ENCODE measurements at regions of chr4 and their contacts with region 1.

Region 1: DNA sequence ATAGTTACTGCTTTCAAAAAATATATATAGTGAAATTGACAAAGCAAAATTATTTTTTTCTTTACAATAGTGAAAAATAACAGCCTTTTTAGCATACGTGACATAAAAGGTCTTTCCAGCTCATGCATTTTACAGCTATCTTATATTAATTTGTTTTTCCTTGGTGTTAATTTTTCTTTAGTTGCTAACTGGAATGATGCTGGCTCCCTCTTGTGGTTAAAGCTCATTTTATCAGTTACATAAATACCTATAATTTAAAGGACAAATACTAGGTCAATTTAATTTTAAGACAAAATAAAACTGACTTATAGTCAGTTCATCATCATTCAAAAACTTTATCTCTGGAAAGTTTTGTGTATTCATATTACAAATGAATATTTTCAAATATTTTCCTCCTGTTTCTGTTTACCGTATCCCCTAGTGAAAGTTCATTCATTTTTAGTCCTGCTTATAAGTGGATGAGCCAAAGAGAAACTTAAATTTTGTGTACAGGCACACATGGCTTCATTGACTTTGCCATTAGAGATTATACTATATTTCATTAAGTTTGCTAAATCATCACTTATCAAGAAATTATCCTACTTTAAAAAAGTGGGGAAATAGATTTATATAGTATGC is 9.9 kb upstream of the ANAPC4 start:
- DNase-seq: no peak
- H3K4me3 ChIP-seq: no peak overlapping the region
- H3K27ac ChIP-seq: no peak overlapping the region
- H3K4me1 ChIP-seq: peaks cover 0 to 4% (median 1%) of the 10 kb centered on the region in 4 experiments; a peak in 2 of 7 replicates
- H3K27me3 ChIP-seq: no peaks in the 10 kb centered on the region
- CTCF ChIP-seq: peak in 2 of 3 experiments; percentile 36 to 37; a peak in 2 of 4 replicates
- EP300 ChIP-seq: no peak
- POLR2A ChIP-seq: no peak
- RAD21 ChIP-seq: peak; percentile 55 to 72

Region 2: GRCh38 chr4:25180524-25181131 is 186.5 kb before region 1 on chr4:
- CTCF ChIA-PET with region 1: interaction called, 21 read pairs
- POLR2A ChIA-PET with region 1: no interaction called
- DNase-seq: no peak
- H3K4me3 ChIP-seq: no peak overlapping the region
- H3K27ac ChIP-seq: no peak overlapping the region
- H3K4me1 ChIP-seq: no peaks in the 10 kb centered on the region
- H3K27me3 ChIP-seq: no peaks in the 10 kb centered on the region
- CTCF ChIP-seq: peak in 2 of 3 experiments; percentile 65 to 75; a peak in 3 of 4 replicates
- EP300 ChIP-seq: no peak
- POLR2A ChIP-seq: no peak
- RAD21 ChIP-seq: peak; percentile 80 to 84

Region 3: DNA sequence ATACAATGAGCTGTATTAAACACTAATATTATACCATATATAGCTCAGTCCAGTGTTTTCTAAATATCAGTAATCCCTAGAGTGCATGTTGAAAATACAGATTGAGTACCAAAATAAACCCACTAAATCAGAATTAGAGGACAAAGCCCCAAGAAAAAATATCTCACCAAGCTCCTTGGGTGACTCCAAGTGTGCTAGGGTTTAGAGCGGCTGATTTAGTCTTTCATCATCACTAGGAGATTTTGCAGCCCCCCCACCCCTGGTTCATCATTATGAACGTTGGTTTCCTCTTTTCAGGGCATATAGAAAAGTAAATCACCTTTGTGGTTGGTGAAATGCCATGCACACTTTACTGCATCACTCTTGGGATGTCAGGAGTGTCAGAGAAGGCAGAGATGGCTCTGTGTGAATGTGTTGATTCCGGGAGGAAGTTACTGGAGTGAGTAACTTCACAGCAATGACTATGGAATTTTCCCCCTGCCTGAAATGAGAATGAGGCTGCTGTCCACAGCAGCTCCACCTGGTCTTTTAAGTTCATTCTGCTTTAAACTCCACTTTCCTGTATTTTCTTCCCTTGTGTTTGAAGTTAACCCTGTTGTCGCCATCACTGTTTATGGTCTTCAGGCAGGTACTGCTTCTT is 15.2 kb before region 1 on chr4:
- CTCF ChIA-PET with region 1: interaction called, 31 read pairs
- POLR2A ChIA-PET with region 1: no interaction called
- DNase-seq: peak in 1 of 2 experiments; percentile 23
- H3K4me3 ChIP-seq: no peak overlapping the region
- H3K27ac ChIP-seq: no peak overlapping the region; the same call in 1 of the 2 replicates
- H3K4me1 ChIP-seq: no peaks in the 10 kb centered on the region
- H3K27me3 ChIP-seq: no peaks in the 10 kb centered on the region
- CTCF ChIP-seq: no peak
- EP300 ChIP-seq: no peak
- POLR2A ChIP-seq: no peak
- RAD21 ChIP-seq: no peak

Region 4: DNA sequence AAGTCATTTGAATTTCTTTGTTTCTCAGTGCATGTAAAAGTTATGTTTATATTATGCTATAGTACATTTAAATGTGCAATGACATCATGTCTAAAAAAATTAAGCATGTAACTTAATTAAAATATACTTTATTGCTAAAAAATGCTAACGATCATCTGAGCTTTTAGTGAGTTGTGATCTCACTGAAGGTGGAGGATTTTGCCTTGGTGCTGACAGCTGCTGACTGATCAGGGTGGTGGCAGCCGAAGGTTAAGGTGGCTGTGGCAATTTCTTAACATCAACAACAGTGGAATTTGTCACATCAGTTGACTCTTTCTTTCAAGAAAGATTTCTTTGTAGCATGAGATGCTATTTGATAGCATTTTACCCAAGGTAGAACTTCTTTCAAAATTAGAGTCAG is 16.5 kb after region 1 on chr4:
- CTCF ChIA-PET with region 1: interaction called, 11 read pairs
- POLR2A ChIA-PET with region 1: interaction called, 4 read pairs
- DNase-seq: no peak
- H3K4me3 ChIP-seq: no peak overlapping the region
- H3K27ac ChIP-seq: no peak overlapping the region
- H3K4me1 ChIP-seq: no peaks in the 10 kb centered on the region
- H3K27me3 ChIP-seq: no peaks in the 10 kb centered on the region
- CTCF ChIP-seq: no peak
- EP300 ChIP-seq: no peak
- POLR2A ChIP-seq: no peak
- RAD21 ChIP-seq: no peak